Motor neuron (in vitro differentiated cells): ENCODE measurements at regions of chr15 and their contacts with region 1.

Region 1: GRCh38 chr15:44971036-44971435 is 14.5 kb downstream of the TERB2 start:
- ATAC-seq: no peak
- H3K4me3 ChIP-seq: no peak overlapping the region
- H3K27ac ChIP-seq: no peak overlapping the region
- H3K4me1 ChIP-seq: no peaks in the 10 kb centered on the region

Region 2: GRCh38 chr15:43390723-43391122 is 1580.3 kb before region 1 on chr15:
- in situ Hi-C with region 1: no loop called
- ATAC-seq: no peak
- H3K4me3 ChIP-seq: no peak overlapping the region
- H3K27ac ChIP-seq: no peak overlapping the region
- H3K4me1 ChIP-seq: no peaks in the 10 kb centered on the region

Region 3: DNA sequence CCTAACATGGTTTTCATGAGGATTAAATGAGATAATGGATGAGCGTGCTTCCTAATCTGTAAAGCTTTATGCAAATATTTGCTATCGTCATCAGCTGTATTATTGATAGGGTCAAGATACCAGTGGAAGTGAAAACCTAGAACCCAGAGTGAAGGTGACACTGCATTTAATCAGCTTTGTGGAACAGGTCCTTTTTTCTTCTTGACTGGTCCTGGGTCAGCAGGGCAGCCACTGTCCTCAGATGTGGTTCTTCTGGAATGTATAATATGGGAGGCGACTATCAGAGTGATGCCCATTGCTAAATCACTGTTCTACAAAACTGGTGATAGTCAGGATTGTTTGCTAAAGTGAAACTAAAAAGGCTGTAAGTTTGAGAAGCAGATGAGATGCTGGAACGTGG is 93.3 kb after region 1 on chr15:
- in situ Hi-C with region 1: loop called in 1 of 9 experiments (anchors 25 kb)
- ATAC-seq: peak in 2 of 8 experiments; percentile 87 to 88
- H3K4me3 ChIP-seq: no peak overlapping the region
- H3K27ac ChIP-seq: no peak overlapping the region
- H3K4me1 ChIP-seq: no peaks in the 10 kb centered on the region